ENCODE measurements at regions of chr18 and their contacts with region 1.

Region 1: DNA sequence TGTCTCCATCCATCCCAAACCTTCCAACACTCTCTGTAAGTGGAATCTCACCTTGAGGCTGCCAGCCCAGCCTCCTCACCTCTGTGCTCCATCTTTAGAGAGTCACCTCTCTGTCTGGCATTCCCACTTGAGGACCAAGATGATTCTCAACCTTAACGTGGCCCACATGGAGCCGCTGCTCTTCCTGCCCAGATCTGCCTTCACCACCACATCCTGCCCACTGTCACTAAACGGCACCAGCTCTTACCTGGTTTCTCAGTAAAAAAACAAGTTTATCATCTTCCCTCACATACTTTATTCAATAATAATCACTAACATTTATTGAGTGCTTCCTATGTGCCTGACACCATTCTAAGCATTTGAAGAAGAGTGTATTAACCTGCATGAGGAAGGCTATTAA is 80.4 kb downstream of the NEDD4L start:
- DNase-seq: no peak

Region 2: DNA sequence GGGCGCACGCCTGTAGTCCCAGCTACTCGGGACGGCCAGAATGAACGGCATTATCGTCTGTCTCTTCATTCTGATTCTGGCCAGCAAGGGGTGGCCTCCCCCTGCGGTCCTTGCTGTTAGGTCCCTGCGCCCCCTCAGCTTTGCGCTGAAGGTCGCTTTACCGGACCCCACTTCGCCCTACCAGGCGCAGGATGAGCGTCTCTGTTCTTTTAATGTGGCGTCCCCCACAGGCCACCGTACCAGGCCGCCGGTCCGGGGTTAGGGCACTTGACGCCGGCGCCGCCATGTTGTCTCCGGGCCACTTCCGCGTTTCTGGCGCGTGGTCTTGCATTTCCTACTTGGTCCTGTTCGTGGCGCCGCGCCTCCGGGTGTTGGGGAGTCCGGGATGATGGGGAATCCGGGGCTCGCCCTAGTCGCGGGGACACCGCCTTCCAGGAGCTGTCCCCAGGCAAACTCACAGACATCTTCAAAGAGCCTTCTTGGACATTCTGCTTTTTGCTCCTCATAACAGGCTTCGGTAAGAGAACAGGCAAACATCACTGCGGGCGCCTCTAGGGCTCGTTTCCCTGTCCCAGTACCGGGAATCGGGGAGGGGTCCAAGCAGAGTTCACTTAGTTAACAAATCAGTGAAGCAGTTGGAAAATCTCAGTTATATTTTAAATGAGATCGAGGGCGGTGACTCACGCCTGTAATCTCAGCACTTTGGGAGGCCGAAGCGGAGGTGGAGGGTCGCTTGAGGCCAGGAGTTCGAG is 494.3 kb before region 1 on chr18:
- intact Hi-C with region 1: loop called (anchors 5 kb)
- DNase-seq: peak; percentile 98

Region 3: GRCh38 chr18:57881818-57882413 is 242.6 kb before region 1 on chr18:
- intact Hi-C with region 1: loop called (anchors 5 kb)
- DNase-seq: no peak

Region 4: GRCh38 chr18:58476516-58477256 is 352.2 kb after region 1 on chr18:
- intact Hi-C with region 1: no loop called
- DNase-seq: no peak